Naive thymus-derived CD8-positive, alpha-beta T cell (primary cell): ENCODE measurements at regions of chr6 and their contacts with region 1.

Region 1: GRCh38 chr6:31776989-31777666 is at the start of gene VWA7:
- DNase-seq: peak in 8 of 10 donors; percentile 24 to 76 (median 32)
- ATAC-seq: peak; percentile 65
- H3K4me3 Mint-ChIP-seq: peak within 1 kb of the TSS in 8 of 10 donors; percentile 12 to 62 (median 46)
- H3K27ac Mint-ChIP-seq: peak within 1 kb of the TSS in 5 of 10 donors; percentile 35 to 89 (median 55)
- H3K4me1 Mint-ChIP-seq: peaks cover 9 to 37% (median 35%) of the 10 kb centered on the region in 4 donors
- H3K27me3 Mint-ChIP-seq: peaks cover 0 to 13% (median 0%) of the 10 kb centered on the region in 5 donors
- polyA plus RNA-seq, gene VWA7: 0.34 TPM in 1 of 3 donors, not detected in the others

Region 2: DNA sequence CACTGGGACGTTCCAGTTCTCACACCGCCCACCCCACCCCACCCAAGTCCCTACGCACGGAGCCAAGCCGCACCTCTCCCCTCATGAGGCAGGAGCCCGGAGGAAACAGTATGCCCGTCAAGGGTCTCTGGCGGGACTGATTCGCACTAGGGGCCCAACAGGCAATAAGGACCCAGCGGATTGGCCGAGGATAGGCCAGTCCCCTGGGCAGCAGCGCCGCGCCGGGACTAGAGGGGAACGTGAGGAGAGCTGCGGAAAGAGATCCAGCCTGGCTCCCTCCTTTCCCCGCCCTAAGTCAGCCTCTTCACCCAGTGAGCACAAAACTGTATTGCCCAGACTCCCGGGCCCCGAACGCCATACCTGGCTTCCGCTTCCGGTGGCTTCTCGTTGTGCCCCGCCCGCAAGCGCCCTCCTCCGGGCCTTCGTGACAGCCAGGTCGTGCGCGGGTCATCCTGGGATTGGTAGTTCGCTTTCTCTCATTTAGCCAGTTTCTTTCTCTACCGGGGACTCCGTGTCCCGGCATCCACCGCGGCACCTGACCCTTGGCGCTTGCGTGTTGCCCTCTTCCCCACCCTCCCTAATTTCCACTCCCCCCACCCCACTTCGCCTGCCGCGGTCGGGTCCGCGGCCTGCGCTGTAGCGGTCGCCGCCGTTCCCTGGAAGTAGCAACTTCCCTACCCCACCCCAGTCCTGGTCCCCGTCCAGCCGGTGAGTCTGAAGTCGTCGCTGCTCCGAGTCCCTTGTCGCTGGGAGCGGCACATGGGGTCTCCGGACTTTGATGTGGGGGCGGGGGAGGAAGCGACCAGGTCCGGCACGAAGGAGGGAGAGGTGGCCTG is 111.4 kb before region 1 on chr6 and contains the start of gene CSNK2B:
- POLR2A ChIA-PET with region 1: no interaction called
- DNase-seq: peak; percentile 94 to 98 (median 98)
- ATAC-seq: peak; percentile 85 to 86
- H3K4me3 Mint-ChIP-seq: peak within 1 kb of the TSS; percentile 93 to 100 (median 97)
- H3K27ac Mint-ChIP-seq: peak within 1 kb of the TSS; percentile 96 to 99 (median 98)
- H3K4me1 Mint-ChIP-seq: peaks cover 21 to 73% (median 67%) of the 10 kb centered on the region in 4 donors
- H3K27me3 Mint-ChIP-seq: no peaks in the 10 kb centered on the region
- polyA plus RNA-seq, gene CSNK2B: 214 to 230 (median 217) TPM

Region 3: GRCh38 chr6:31752739-31753319 is 24.3 kb before region 1 on chr6:
- POLR2A ChIA-PET with region 1: no interaction called
- DNase-seq: no peak
- ATAC-seq: no peak
- H3K4me3 Mint-ChIP-seq: no peak overlapping the region
- H3K27ac Mint-ChIP-seq: no peak overlapping the region
- H3K4me1 Mint-ChIP-seq: no peaks in the 10 kb centered on the region
- H3K27me3 Mint-ChIP-seq: no peaks in the 10 kb centered on the region

Region 4: DNA sequence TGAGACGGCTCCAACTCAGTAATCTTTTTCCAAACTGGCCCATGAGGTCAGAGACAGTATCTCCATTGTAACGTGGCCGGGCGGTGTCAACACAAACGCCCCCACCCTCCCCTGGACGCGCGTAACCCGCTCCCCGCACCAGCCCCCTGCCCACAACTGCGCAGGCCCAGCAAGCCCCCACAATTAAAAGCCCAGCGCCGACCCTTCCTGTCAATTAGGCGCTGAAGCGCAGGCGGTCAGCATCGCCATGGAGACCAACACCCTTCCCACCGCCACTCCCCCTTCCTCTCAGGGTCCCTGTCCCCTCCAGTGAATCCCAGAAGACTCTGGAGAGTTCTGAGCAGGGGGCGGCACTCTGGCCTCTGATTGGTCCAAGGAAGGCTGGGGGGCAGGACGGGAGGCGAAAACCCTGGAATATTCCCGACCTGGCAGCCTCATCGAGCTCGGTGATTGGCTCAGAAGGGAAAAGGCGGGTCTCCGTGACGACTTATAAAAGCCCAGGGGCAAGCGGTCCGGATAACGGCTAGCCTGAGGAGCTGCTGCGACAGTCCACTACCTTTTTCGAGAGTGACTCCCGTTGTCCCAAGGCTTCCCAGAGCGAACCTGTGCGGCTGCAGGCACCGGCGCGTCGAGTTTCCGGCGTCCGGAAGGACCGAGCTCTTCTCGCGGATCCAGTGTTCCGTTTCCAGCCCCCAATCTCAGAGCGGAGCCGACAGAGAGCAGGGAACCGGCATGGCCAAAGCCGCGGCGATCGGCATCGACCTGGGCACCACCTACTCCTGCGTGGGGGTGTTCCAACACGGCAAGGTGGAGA is 38.1 kb after region 1 on chr6 and contains the starts of genes HSPA1A and HSPA1L:
- POLR2A ChIA-PET with region 1: interaction called, 11 read pairs
- DNase-seq: peak in 6 of 10 donors; percentile 23 to 68 (median 44)
- ATAC-seq: peak; percentile 17 to 39
- H3K4me3 Mint-ChIP-seq: peak within 1 kb of the TSS; percentile 90 to 95 (median 92)
- H3K27ac Mint-ChIP-seq: peak within 1 kb of the TSS; percentile 79 to 95 (median 90)
- H3K4me1 Mint-ChIP-seq: peaks cover 7 to 42% (median 28%) of the 10 kb centered on the region in 4 donors
- H3K27me3 Mint-ChIP-seq: no peaks in the 10 kb centered on the region
- polyA plus RNA-seq, gene HSPA1A: 6.9 to 17.3 (median 11.4) TPM
- polyA plus RNA-seq, gene HSPA1L: 0.56 to 1.6 (median 1.6) TPM